ENCODE measurements at regions of chr7 and their contacts with region 1.

Region 1: DNA sequence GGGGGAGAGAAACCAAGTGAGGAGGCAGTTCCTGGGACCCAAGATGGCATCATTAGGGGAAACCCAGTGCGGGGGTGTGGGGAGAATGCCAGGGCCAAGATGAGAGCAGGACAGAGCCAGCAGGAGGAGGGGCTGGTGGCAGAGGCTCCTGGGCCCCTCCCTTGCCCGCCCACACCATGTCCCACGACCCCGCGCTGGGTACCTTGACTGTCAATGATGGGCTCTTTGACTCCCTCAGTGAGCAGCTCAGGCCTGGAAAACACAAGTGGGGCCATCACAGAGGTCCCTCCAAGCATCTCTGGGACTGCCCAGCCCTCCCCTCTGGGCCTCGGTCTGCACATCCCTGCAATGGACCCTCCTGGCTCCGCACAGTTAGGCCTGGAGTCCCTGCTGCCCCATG is 75.4 kb downstream of the RABGEF1 start:
- DNase-seq: no peak
- ATAC-seq: peak; percentile 29; the same call in 1 of the 2 replicates
- H3K4me3 ChIP-seq: no peak overlapping the region
- H3K27ac ChIP-seq: no peak overlapping the region
- H3K4me1 ChIP-seq: no peaks in the 10 kb centered on the region
- H3K27me3 ChIP-seq: no peaks in the 10 kb centered on the region
- CTCF ChIP-seq: no peak

Region 2: GRCh38 chr7:66642186-66642585 is 173.8 kb before region 1 on chr7:
- CTCF ChIA-PET with region 1: no interaction called
- POLR2A ChIA-PET with region 1: interaction called, 10 read pairs
- in situ Hi-C with region 1: no loop called
- intact Hi-C with region 1: no loop called
- DNase-seq: no peak
- ATAC-seq: no peak
- H3K4me3 ChIP-seq: no peak overlapping the region
- H3K27ac ChIP-seq: no peak overlapping the region
- H3K4me1 ChIP-seq: no peaks in the 10 kb centered on the region
- H3K27me3 ChIP-seq: no peaks in the 10 kb centered on the region
- CTCF ChIP-seq: no peak

Region 3: GRCh38 chr7:66800591-66800990 is 15.4 kb before region 1 on chr7:
- CTCF ChIA-PET with region 1: interaction called, 14 read pairs
- POLR2A ChIA-PET with region 1: no interaction called
- in situ Hi-C with region 1: no loop called
- intact Hi-C with region 1: no loop called
- DNase-seq: no peak
- ATAC-seq: no peak
- H3K4me3 ChIP-seq: no peak overlapping the region
- H3K27ac ChIP-seq: no peak overlapping the region
- H3K4me1 ChIP-seq: no peaks in the 10 kb centered on the region
- H3K27me3 ChIP-seq: no peaks in the 10 kb centered on the region
- CTCF ChIP-seq: no peak

Measured in Panc1 (cell line).